ENCODE measurements at regions of chr2 and their contacts with region 1.

Region 1: DNA sequence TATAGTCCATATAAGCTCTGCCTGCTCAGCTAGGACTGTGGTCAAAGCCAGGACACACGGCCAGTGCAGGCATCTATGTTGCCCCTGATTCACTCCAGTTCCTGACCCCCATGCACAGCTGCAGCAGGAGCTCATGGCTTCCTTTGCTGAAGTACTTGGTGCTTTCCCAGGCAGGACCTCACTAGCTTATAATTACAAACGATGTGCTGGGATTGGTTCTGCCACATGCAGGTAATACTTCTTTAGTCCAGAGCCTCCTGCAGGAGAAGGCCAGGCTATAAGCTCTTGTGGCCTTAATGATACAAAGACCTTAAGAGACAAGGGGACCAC is 21.1 kb upstream of the SEMA4C start:
- DNase-seq: no peak
- H3K4me3 ChIP-seq: no peak overlapping the region
- H3K27ac ChIP-seq: no peak overlapping the region
- H3K27me3 ChIP-seq: peaks cover 1% of the 10 kb centered on the region
- CTCF ChIP-seq: no peak

Region 2: DNA sequence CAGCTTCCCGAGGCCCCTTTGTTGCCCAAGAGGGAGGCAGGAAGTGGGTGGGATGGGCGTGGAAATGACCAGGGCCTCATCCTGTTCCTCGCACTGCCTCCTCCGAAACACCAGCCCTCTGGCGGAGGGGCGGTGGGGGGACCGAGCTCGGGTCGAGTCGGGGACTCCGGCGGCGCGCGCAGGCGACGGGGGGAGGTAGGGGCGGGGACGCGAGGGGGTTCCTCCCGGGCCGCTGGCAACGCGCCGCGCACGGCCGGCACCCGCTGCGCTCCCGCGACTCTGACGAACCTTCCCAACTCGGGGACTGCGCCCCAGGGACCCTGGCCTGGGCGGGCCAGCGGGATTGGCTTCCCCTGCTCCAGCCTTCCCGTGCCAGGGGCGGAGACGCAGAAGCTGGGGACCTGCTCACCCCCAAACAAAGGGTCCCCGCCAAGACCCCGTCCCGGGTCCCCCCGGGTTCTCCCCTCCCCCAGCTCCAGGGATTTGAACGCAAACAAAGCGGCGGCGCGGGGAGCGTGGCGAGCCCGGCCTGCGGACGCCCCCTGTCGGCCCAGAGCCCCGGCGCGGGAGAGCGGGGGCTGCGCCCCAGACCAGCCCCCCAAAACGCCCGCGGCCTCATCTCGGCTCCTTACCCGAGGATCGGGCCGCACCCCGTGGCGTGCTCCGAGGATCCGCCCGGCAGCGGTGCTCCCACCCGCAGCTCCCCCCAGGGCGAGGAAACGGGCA is 22.3 kb before region 1 on chr2:
- CTCF ChIA-PET with region 1: interaction called, 10 read pairs
- POLR2A ChIA-PET with region 1: interaction called, 6 read pairs
- DNase-seq: peak; percentile 83
- H3K4me3 ChIP-seq: peak overlapping the region; percentile 85
- H3K27ac ChIP-seq: peak overlapping the region; percentile 93
- H3K27me3 ChIP-seq: no peaks in the 10 kb centered on the region
- CTCF ChIP-seq: peak; percentile 58